ENCODE measurements at regions of chr1 and their contacts with region 1.

Region 1: DNA sequence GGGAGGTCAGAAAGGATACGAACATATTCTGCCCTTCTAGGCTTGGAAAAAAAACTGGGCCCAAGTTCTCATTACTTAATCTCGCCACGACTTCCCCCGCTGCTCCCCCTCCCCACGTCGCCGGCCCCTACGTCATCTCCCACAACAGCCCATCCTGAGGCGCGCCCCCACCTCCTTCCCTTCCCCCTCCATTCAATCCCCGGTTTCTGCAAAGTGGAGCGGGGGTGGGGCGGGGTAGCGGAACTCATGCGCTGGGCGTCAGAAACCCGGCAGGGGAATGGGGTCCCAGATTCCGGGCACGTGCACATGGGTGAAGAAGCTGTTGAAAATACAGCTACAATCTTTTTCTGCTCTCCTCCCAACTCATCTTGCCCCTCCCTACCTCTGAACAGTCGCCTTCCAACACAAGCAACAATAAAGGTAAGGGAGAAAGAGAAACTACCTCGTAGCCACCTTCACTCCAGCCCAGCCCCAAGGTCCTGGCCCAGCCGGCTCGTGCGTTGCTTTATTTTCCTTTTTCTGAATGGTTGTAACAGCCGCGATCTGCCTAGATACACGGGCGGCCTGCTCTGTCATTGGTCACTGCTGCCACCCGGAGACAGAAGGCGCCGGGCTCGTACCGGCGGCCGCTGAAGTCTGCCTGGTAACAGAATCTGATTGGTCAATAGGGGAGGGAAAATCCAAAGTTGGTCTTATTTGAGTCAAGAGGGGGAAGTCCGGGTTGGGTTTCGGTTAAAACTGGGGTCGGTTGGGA is at the start of gene RFX5:
- DNase-seq: peak; percentile 98
- H3K4me3 ChIP-seq: peak within 1 kb of the TSS; percentile 66 to 87 (median 73)
- H3K27ac ChIP-seq: peak within 1 kb of the TSS; percentile 88 to 94 (median 92)
- H3K4me1 ChIP-seq: peaks cover 0 to 18% (median 11%) of the 10 kb centered on the region in 4 donors
- H3K27me3 ChIP-seq: no peaks in the 10 kb centered on the region
- CTCF ChIP-seq: no peak
- EP300 ChIP-seq: no peak
- POLR2A ChIP-seq: peak; percentile 38 to 54
- total RNA-seq, gene RFX5: 39.6 to 67.9 (median 56.1) TPM

Region 2: DNA sequence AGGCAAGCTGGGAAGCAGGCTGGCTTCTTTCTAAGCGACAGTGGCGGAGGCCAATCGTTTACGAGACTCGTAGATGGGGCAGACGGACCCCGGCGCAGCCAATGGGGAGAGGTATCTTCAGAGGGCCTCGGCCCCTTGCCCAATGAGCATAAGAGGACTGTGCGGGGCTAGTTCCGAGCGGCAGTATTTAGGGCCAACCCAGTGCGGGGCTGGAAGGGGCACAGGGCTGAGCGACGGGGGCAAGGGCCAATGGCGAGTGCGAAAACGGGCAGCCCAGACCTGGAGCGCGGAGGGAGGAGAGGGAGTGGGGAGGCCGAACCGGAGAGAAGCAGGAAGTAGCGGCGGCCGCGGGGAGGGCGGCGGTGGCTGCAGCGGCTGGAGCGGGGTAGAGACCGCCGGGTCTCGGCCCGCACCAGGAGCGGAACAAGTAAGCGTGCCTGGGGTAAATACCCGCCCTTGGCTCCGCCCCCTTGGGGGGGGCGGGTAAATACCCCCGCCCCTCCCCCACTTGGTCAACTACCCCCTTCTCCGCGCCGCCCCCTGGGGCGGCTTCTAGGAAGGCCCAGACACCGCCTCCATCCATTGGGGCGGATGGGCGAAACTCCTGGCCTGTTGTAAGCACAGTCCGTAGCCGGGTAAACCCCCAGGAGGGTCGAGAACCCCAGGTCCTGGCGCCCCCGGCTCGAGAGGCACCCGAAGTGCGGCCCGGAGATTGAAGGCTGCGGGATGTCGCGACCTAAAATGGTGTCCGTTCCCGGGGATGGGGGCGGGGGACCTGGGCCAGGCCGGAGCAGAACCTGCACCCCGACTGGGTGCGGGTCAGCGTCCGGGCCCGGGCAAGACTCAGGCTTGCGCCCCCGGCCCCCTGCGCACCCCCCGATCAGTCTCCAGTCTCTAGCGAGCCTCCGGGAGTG is 64.7 kb before region 1 on chr1 and contains the start of gene ZNF687:
- intact Hi-C with region 1: loop called (anchors 5 kb)
- DNase-seq: peak; percentile 100
- H3K4me3 ChIP-seq: peak within 1 kb of the TSS; percentile 73 to 84 (median 80)
- H3K27ac ChIP-seq: peak within 1 kb of the TSS; percentile 97 to 99 (median 98)
- H3K4me1 ChIP-seq: peaks cover 2 to 22% (median 21%) of the 10 kb centered on the region in 4 donors
- H3K27me3 ChIP-seq: no peaks in the 10 kb centered on the region
- CTCF ChIP-seq: no peak
- EP300 ChIP-seq: no peak
- POLR2A ChIP-seq: peak; percentile 60 to 86
- total RNA-seq, gene ZNF687: 17.6 to 24.2 (median 18.3) TPM

Region 3: DNA sequence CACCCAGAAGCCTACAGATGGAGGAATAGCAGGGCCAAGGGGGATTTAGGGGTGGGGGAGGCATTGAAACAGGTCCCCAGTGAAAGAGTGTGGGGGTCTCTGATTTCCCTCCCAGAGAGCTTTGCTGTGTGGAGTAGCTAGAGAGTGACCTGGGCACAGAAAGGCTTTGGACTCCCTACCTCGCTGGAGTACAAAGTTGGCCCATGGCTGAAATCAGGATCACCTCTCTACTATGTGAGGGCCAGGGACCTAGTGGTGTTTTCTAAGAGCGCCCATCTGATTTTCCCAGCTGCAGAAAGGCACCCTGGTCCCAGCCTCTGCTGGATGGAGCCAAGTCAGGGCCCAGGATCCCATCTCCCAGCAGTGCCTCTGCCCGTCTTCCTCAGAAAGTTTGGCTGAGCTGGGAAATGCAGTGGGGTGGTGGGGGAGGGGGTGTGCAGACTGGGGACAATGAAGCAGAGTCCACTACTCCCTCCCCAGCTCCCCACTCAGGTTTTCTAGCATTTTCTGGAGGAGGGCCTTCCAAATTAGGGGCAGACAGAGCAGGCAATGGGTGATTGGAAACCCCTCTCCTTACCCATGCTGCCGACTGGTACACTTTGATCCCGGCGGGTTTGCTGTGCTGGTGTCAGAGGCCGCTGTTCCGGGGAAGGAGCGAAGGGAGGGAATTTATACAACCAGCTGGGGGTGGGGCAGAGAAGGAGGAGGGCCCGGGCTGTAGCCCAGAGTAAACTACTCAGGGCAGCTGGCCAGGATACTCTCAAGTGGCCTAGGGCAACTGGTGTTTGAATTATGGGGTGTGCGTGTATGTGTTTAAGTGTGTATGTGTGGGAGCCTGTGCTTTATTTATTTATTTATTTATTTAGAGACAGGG is 25.4 kb after region 1 on chr1 and contains the start of gene SELENBP1:
- intact Hi-C with region 1: loop called (anchors 1 kb)
- DNase-seq: peak; percentile 96
- H3K4me3 ChIP-seq: peak within 1 kb of the TSS; percentile 46 to 54 (median 48)
- H3K27ac ChIP-seq: peak within 1 kb of the TSS; percentile 81 to 89 (median 86)
- H3K4me1 ChIP-seq: peaks cover 0 to 48% (median 37%) of the 10 kb centered on the region in 4 donors
- H3K27me3 ChIP-seq: no peaks in the 10 kb centered on the region
- CTCF ChIP-seq: no peak
- EP300 ChIP-seq: no peak
- POLR2A ChIP-seq: peak; percentile 71 to 95
- total RNA-seq, gene SELENBP1: 95.8 to 142 (median 127) TPM

Region 4: DNA sequence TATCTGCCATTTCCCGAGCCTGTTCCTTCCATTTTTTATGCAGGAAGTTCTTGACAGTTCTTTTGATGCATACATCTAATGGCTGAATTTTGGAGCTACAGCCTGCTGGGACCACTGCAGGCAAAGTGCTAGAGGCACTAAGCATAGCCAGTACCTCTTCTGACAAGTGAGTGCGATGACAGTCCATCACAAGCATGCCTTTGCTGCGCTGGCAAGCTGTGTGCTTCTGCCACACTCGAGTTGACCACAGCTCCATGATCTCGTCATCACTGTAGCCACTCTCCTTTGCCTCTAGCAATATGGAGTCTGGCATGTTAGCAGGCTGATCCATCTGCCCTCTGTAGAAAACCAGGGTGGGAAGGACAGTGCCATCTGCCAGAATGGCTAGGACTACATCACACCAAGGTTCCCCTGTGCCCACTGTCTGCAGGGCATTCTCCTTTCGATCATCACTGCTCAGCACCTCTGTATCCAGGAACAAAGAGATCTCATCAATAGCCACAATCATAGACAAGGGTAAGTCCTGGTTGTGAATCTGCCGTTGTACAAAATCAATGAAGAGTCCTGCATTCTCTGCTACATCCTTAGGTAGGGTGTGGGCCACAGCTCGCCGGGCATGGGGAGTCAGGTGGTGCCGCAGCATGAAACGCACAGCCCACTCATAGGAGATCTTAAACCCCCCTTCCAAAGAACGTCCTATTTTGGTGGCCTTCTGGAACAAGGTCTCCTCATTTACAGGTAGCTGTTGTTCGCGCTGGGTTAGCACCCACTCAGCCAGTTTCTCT is 58.4 kb after region 1 on chr1:
- intact Hi-C with region 1: no loop called
- DNase-seq: no peak
- H3K4me3 ChIP-seq: no peak overlapping the region
- H3K27ac ChIP-seq: no peak overlapping the region
- H3K4me1 ChIP-seq: peaks cover 0 to 13% (median 8%) of the 10 kb centered on the region in 4 donors
- H3K27me3 ChIP-seq: no peaks in the 10 kb centered on the region
- CTCF ChIP-seq: no peak
- EP300 ChIP-seq: no peak
- POLR2A ChIP-seq: no peak